AG04449 (cell line): ENCODE measurements at regions of chr12 and their contacts with region 1.

Region 1: GRCh38 chr12:2783936-2784600 is 10.7 kb upstream of the FKBP4 start:
- DNase-seq: no peak
- H3K4me3 ChIP-seq: peak overlapping the region; percentile 30
- CTCF ChIP-seq: peak; percentile 90

Region 2: GRCh38 chr12:2682296-2683251 is 101.5 kb before region 1 on chr12:
- CTCF ChIA-PET with region 1: interaction called, 12 read pairs
- POLR2A ChIA-PET with region 1: no interaction called
- DNase-seq: no peak
- H3K4me3 ChIP-seq: no peak overlapping the region
- CTCF ChIP-seq: peak; percentile 50

Region 3: DNA sequence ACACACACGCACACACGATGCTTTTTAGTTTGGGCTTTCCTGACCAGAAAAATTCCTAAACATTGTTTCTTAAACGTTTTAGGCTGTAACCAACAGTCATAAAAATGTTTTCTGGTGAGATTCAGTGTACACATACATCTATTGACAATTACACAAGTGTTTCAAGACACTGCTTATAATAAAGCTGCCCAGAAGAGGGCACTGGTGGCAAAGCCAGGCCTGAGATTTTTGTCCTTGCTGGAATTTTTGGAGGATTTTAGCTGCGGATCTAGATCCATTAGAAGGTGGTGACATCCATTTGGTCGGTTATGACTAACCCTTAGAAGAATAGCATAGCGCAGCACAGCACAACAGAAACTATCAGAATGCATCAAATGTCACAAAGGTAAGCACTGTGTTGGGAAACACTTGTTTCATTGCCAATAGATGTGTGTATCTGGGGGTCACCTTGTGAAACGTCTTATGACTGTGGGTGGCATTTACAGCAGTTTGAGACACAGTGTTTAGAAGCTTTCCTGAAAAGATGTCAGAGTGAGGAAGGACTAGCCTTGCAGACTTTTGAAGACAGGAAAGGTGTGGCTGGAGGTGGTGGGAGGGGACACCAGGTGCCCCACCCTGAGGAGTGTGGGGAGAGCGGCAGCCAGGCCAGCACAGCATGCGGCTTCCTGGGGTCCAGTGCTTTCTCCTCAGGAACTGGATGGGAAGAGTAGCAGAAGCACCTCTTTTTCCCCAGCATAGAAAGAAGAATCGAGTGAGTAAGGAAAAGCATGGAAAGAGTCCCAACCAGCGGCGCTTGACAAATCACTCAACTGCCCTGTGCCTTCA is 44.0 kb before region 1 on chr12:
- CTCF ChIA-PET with region 1: interaction called, 28 read pairs
- POLR2A ChIA-PET with region 1: no interaction called
- DNase-seq: no peak
- H3K4me3 ChIP-seq: no peak overlapping the region
- CTCF ChIP-seq: peak; percentile 55

Region 4: DNA sequence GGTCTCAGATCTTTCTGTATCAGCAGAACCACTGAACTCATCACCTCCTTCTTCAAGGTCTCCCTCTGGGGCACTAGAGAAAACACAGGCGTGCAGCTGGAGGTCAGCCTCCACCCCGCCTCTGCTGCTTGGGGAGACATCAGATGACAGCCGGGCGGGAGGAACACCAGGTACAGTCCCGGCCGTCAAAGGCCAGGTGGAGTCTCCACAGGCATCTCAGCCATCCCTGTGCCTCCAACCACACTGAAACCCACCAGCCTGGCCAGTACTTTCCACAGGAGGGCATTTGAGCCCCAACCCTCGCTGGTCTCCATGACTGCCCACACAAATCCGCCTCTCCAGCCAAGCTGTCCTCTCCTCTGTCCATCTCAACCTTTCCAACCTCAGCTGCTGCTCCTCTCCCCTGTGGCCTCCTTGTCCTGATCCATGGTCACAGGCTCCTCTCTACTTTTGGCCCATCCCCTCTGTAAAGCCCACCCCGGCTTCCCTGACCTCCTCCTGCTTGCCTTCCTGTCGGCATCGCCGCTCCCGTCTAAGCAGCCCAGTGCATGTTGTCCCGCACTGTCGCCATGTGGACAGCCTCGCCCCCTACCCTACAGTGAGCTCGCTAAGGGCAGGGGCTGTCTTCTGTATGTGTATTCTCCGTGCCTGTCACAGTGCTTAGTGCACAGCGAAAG is 10.7 kb before region 1 on chr12:
- CTCF ChIA-PET with region 1: interaction called, 17 read pairs
- POLR2A ChIA-PET with region 1: no interaction called
- DNase-seq: no peak
- H3K4me3 ChIP-seq: no peak overlapping the region
- CTCF ChIP-seq: no peak

Region 5: DNA sequence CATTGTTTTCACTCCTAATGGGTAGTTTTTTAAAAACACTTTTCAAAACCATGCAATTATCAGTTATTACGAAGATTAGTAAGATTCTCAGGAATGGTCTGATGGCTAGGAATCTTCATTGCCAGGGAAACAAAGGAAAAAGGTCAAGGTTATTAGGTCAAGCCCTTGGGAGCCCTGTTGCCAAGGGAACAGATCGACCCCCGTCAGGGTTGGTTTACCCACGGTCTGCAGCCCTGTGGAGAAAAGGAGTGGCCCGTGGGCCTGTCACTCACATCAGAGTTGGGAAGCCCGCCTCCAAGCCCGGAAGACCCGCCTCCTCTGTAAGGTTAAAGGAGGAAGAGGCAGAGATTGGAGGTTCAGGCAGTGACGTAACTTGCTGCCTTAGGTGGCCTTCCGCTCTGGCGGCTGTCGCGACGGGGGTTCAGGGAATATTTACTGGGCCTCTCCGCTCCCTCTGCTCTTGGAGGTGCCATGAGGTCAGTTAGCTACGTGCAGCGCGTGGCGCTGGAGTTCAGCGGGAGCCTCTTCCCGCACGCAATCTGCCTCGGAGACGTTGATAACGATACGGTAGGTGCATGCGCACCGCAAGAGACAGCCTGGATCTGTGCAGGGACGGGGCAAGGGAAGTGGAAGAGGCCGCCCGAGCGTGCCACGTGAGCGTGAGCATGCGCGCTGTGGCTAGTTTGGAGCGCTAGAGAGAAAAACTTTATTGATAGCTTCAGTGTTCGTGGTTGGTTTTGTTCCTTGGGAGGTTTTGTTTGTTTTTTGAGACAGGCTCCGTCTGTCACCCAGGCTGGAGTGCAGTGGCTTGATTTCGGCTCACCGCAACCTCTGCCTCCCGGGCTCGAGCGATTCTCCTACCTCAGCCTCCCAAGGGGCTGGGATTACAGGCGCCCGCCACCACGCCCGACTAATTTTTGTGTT is 28.5 kb after region 1 on chr12 and contains the start of gene ITFG2:
- CTCF ChIA-PET with region 1: interaction called, 11 read pairs
- POLR2A ChIA-PET with region 1: no interaction called
- DNase-seq: peak; percentile 87
- H3K4me3 ChIP-seq: peak within 1 kb of the TSS; percentile 72
- CTCF ChIP-seq: no peak